A673 (cell line): ENCODE measurements at regions of chr3 and their contacts with region 1.

Region 1: GRCh38 chr3:101809178-101810021 is 30.4 kb downstream of the NXPE3 start:
- DNase-seq: peak; percentile 72
- H3K4me3 ChIP-seq: no peak overlapping the region
- H3K27ac ChIP-seq: peak overlapping the region; percentile 26
- H3K4me1 ChIP-seq: peaks cover 25% of the 10 kb centered on the region
- H3K27me3 ChIP-seq: no peaks in the 10 kb centered on the region
- CTCF ChIP-seq: peak; percentile 73

Region 2: GRCh38 chr3:101643861-101644613 is 165.4 kb before region 1 on chr3:
- CTCF ChIA-PET with region 1: no interaction called
- POLR2A ChIA-PET with region 1: no interaction called
- intact Hi-C with region 1: no loop called
- DNase-seq: peak; percentile 84
- H3K4me3 ChIP-seq: no peak overlapping the region
- H3K27ac ChIP-seq: no peak overlapping the region
- H3K4me1 ChIP-seq: peaks cover 18% of the 10 kb centered on the region
- H3K27me3 ChIP-seq: no peaks in the 10 kb centered on the region
- CTCF ChIP-seq: no peak

Region 3: DNA sequence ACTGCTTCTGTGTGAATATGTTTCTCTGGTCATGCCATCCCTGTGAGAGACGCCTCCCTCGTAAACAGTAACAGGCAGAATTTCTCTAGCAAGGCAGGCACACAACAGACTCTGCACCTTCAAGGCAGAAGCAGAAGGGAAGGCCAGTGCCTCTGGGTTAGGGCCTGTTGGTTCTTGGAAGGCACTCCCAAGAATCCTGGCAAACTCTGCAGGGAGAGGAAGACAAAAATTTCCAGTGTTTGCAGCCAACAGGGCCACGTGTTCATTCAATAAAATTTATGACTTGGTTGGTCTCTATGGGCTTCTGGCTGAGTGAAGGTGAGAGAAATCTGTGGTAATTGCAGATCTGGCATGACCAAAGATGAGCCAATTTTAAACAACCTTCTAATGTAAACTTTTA is 79.3 kb after region 1 on chr3:
- CTCF ChIA-PET with region 1: no interaction called
- POLR2A ChIA-PET with region 1: no interaction called
- intact Hi-C with region 1: no loop called
- DNase-seq: no peak
- H3K4me3 ChIP-seq: no peak overlapping the region
- H3K27ac ChIP-seq: no peak overlapping the region
- H3K4me1 ChIP-seq: no peaks in the 10 kb centered on the region
- H3K27me3 ChIP-seq: no peaks in the 10 kb centered on the region
- CTCF ChIP-seq: no peak

Region 4: GRCh38 chr3:101902041-101902440 is 92.6 kb after region 1 on chr3:
- CTCF ChIA-PET with region 1: no interaction called
- POLR2A ChIA-PET with region 1: no interaction called
- intact Hi-C with region 1: no loop called
- DNase-seq: peak; percentile 82
- H3K4me3 ChIP-seq: no peak overlapping the region
- H3K27ac ChIP-seq: peak overlapping the region; percentile 24
- H3K4me1 ChIP-seq: no peaks in the 10 kb centered on the region
- H3K27me3 ChIP-seq: no peaks in the 10 kb centered on the region
- CTCF ChIP-seq: no peak

Region 5: GRCh38 chr3:101925573-101925972 is 116.2 kb after region 1 on chr3:
- CTCF ChIA-PET with region 1: no interaction called
- POLR2A ChIA-PET with region 1: interaction called, 15 read pairs
- intact Hi-C with region 1: no loop called
- DNase-seq: no peak
- H3K4me3 ChIP-seq: no peak overlapping the region
- H3K27ac ChIP-seq: no peak overlapping the region
- H3K4me1 ChIP-seq: peaks cover 14% of the 10 kb centered on the region
- H3K27me3 ChIP-seq: no peaks in the 10 kb centered on the region
- CTCF ChIP-seq: no peak

Region 6: GRCh38 chr3:102038477-102039142 is 229.2 kb after region 1 on chr3:
- CTCF ChIA-PET with region 1: interaction called, 10 read pairs
- POLR2A ChIA-PET with region 1: no interaction called
- intact Hi-C with region 1: loop called (anchors 1 kb)
- DNase-seq: peak; percentile 82
- H3K4me3 ChIP-seq: no peak overlapping the region
- H3K27ac ChIP-seq: peak overlapping the region; percentile 76
- H3K4me1 ChIP-seq: peaks cover 17% of the 10 kb centered on the region
- H3K27me3 ChIP-seq: no peaks in the 10 kb centered on the region
- CTCF ChIP-seq: no peak

Region 7: GRCh38 chr3:102089904-102090492 is 280.6 kb after region 1 on chr3:
- CTCF ChIA-PET with region 1: no interaction called
- POLR2A ChIA-PET with region 1: no interaction called
- intact Hi-C with region 1: loop called (anchors 10 kb)
- DNase-seq: peak; percentile 84
- H3K4me3 ChIP-seq: no peak overlapping the region
- H3K27ac ChIP-seq: peak overlapping the region; percentile 20
- H3K4me1 ChIP-seq: peaks cover 30% of the 10 kb centered on the region
- H3K27me3 ChIP-seq: no peaks in the 10 kb centered on the region
- CTCF ChIP-seq: no peak

Region 8: GRCh38 chr3:102529452-102529851 is 720.1 kb after region 1 on chr3:
- CTCF ChIA-PET with region 1: no interaction called
- POLR2A ChIA-PET with region 1: no interaction called
- intact Hi-C with region 1: loop called (anchors 5 kb)
- DNase-seq: peak; percentile 66
- H3K4me3 ChIP-seq: no peak overlapping the region
- H3K27ac ChIP-seq: no peak overlapping the region
- H3K4me1 ChIP-seq: peaks cover 3% of the 10 kb centered on the region
- H3K27me3 ChIP-seq: no peaks in the 10 kb centered on the region
- CTCF ChIP-seq: peak; percentile 78